Cardiac septum (tissue), 1 donor: ENCODE measurements at regions of chr17 and their contacts with region 1.

Region 1: GRCh38 chr17:81484195-81484979 is 28.2 kb downstream of the ACTG1 start:
- DNase-seq: peak; percentile 95

Region 2: GRCh38 chr17:81253358-81254131 is 230.8 kb before region 1 on chr17:
- intact Hi-C with region 1: loop called (anchors 1 kb)
- DNase-seq: no peak

Region 3: GRCh38 chr17:81294856-81295680 is 189.3 kb before region 1 on chr17 and contains the start of gene SLC38A10:
- intact Hi-C with region 1: loop called (anchors 5 kb)
- DNase-seq: peak; percentile 98
- total RNA-seq, gene SLC38A10: 36.0 TPM

Region 4: DNA sequence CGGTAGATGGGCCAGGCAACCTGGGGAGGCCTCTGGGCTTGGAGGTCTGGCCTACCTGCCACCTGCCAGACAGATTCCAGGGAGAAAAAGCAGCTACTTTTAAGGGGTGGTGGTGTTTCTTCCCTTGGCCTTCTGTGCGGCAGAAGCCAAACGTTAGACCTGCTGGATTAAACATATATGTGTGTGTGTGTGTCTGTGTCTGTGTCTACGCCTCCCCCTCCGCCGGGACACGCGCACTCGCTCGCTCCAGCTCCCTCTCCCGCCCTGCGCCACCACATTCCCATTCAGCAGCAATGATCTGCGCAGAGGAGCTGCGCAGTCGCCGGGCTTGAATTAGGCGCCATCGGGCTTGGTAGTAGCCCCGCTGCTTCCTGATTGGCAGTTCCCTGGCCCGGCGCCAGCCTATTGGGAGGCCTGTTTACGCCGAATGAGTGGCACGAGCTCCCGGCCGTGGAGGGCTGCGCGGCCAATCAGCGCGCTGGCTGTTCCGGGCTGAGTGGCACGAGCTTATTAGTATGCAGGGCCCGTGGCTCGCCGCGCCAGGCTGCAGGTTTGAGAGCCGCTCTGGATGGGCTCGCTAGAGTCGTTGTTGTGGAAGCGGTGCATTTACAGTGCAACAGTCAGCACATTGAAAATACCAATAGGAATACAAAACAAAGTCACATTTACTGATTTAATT is 89.3 kb before region 1 on chr17 and contains the start of gene BAHCC1:
- intact Hi-C with region 1: loop called (anchors 2 kb)
- DNase-seq: peak; percentile 100
- total RNA-seq, gene BAHCC1: 13.5 TPM

Region 5: DNA sequence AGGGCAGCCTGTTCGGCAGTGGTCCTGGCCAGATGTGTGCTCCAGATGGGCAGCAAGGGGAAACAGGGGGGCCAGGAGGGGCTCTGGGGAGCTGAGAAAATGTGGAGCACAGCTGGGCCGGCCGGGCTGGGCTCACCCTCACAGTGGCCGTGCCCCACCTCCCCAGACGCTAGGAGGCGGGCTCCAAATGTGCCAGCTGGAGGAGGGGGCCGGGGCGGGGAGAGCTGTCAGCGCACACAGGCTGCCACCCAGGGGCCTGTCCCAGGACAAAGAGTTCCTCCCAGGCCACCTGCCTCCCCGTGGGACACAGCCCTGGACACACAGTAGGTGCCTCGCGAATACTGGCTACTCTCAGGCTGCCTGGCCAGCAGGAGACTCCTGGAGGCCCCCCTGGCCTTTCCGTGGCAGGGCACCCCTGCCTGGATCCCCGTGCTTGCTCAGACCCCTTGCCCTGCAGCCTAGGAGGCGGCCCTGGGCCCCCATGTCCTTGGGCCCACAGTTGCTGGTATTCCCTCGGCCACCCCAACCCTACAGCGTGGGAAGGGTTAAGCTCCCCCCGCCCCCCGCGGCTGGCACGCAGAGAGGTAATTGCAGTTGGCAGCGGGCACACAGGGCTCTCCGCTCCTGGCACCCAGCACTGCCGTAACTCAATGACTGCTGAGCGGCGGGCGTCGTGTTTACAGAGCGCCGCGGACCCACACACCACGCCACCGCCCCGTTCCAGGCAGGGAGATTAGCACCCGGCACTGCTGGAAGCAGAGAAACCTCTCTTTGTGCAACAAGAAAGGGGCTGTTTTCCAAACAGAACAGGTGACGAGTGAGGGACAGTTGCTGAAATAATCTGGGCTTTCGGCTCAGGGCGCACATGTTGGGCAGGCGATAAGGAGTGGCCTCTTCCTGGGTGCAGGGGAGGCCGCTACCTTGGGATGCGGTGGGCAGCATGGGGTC is 56.9 kb before region 1 on chr17:
- intact Hi-C with region 1: loop called (anchors 2 kb)
- DNase-seq: no peak

Region 6: GRCh38 chr17:81553616-81554181 is 69.3 kb after region 1 on chr17:
- intact Hi-C with region 1: no loop called
- DNase-seq: peak; percentile 74